Posterior vena cava (tissue), 2 donors: ENCODE measurements at regions of chr21 and their contacts with region 1.

Region 1: GRCh38 chr21:25509862-25510261 is 97.4 kb downstream of the MRPL39 start:
- DNase-seq: no peak

Region 2: GRCh38 chr21:23822760-23823159 is 1687.1 kb before region 1 on chr21:
- intact Hi-C with region 1: loop called in 1 of 2 experiments (anchors 10 kb)
- DNase-seq: no peak

Region 3: DNA sequence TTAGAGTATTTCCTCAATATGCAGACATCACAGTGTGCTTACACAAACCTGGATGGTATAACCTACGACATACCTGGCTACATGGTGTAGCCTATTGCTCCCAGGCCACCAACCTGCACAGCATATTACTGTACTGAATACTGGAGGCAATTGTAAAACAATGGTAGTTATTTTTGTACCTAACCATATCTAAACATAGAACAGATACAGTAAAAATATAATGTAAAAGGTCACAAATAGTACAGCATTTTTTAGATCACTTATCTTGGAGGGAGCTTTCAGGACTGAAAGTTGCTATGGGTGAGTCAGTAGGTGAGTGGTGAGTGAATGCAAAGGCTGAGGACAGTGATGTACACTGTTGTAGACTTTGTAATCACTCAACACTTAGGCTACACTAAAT is 394.8 kb before region 1 on chr21:
- intact Hi-C with region 1: no loop called
- DNase-seq: no peak

Region 4: DNA sequence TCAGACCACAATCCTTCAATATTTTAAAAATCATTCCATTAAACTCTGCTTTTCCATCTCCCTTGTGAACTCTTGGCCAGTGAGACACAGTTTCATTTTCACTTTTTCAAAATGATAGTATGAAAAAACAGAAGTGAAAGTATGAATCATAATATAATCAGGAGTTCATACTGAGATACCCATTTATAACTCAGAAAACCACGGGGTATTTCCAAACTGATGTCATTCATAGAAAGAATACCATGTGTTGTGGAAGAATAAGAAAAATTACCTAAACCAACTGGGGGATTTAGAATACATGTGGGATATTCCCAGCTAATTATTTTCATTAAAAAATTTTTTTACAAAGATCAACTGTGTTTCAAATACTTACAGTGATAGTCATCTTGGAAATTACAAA is 52.5 kb before region 1 on chr21:
- intact Hi-C with region 1: no loop called
- DNase-seq: no peak

Region 5: GRCh38 chr21:25561668-25562641 is 52.1 kb after region 1 on chr21:
- intact Hi-C with region 1: no loop called
- DNase-seq: peak; percentile 90

Region 6: DNA sequence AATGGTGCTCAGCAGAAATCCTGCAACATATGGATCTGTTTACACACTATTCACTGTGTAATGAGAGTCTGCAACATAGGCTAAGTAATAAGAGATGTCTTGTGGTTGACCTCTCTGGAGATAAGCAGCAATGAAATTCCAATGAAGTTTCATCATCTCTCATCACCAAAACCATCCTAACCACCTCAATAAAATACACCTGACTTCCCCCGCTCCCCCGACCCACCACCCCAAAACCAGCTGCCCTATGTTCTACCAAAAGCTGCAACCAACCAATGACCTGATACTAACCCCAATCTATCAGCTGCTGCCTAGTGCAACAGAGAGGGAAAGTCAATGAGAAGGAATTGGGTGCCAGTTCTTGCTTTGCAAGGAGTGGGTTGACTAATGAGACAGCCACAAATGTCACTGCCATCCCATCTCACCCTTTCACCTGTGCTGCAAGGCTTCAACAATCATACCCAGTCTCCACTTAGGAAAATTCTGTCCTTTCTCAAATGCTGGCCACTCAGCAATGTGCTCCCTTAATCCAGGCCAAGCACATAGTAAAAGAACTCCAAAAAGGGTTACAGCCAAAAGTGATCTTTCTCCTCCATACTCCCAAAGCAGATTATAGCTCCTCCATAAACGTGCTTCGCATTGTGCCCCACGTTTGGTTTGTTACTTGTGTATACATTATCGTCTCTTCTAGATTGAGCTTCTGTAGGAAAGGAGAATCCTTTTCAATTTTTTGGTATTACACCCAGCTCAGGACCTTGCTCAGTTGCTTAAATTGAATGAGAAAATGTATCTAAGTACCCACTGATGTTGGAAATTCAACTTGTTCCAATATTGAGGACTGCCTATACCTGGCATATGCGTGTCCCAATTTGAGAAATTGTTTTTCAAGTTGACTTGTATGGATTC is 68.4 kb after region 1 on chr21:
- intact Hi-C with region 1: no loop called
- DNase-seq: no peak